Cardiac septum (tissue), 1 donor: ENCODE measurements at regions of chr17 and their contacts with region 1.

Region 1: GRCh38 chr17:38853292-38854219 is at the start of gene RPL23:
- DNase-seq: peak; percentile 96
- total RNA-seq, gene RPL23: 564 TPM

Region 2: GRCh38 chr17:38799378-38800236 is 53.9 kb before region 1 on chr17 and contains the start of gene PIP4K2B:
- intact Hi-C with region 1: no loop called
- DNase-seq: peak; percentile 96
- total RNA-seq, gene PIP4K2B: 48.4 TPM

Region 3: GRCh38 chr17:38824899-38825761 is 28.4 kb before region 1 on chr17 and contains the start of gene CWC25:
- intact Hi-C with region 1: loop called (anchors 1 kb)
- DNase-seq: peak; percentile 96
- total RNA-seq, gene CWC25: 10.4 TPM